ENCODE measurements at regions of chr13 and their contacts with region 1.

Region 1: GRCh38 chr13:25286969-25287961 is at the start of gene MTMR6:
- DNase-seq: peak; percentile 96
- CTCF ChIP-seq: peak; percentile 93

Region 2: GRCh38 chr13:25276748-25277147 is 10.5 kb before region 1 on chr13:
- CTCF ChIA-PET with region 1: interaction called, 80 read pairs
- POLR2A ChIA-PET with region 1: no interaction called
- DNase-seq: no peak
- CTCF ChIP-seq: no peak

Region 3: DNA sequence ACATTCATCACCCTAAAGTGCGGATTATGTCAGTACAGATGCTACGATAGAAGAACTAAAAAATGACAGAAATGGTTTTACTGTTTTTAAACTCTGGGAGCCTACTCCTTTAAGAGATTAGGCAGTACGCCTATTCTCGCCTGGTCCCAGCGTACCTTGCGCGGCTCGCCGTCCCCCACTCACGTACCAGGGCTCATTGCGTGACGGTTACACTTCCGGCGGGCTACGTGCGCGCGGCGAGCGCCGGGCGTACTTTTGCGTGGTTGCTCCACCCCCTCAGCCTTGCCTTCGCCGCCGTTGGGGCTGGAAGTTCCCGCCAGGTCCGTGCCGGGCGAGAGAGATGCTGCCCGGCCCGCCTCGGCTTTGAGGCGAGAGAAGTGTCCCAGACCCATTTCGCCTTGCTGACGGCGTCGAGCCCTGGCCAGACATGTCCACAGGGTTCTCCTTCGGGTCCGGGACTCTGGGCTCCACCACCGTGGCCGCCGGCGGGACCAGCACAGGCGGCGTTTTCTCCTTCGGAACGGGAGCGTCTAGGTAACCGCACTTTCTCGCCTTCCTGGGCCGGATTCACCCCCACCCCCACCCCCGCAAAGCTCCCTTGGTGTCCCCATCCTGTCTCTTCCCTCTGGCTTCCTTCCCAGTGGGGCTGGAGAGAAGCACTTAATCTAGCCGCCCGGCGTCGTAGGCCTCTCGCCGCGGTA is 14.2 kb after region 1 on chr13 and contains the start of gene NUP58:
- CTCF ChIA-PET with region 1: interaction called, 19 read pairs
- POLR2A ChIA-PET with region 1: no interaction called
- DNase-seq: peak; percentile 92
- CTCF ChIP-seq: no peak

Region 4: GRCh38 chr13:25329706-25330105 is 42.4 kb after region 1 on chr13:
- CTCF ChIA-PET with region 1: no interaction called
- POLR2A ChIA-PET with region 1: no interaction called
- DNase-seq: no peak
- CTCF ChIP-seq: no peak